IMR-90 (cell line): ENCODE measurements at regions of chr2 and their contacts with region 1.

Region 1: GRCh38 chr2:233443468-233444183 is 89.3 kb downstream of the DGKD start:
- DNase-seq: peak; percentile 83
- ATAC-seq: peak; percentile 90
- H3K4me3 ChIP-seq: no peak overlapping the region
- H3K27ac ChIP-seq: no peak overlapping the region
- H3K4me1 ChIP-seq: no peaks in the 10 kb centered on the region
- H3K27me3 ChIP-seq: no peaks in the 10 kb centered on the region
- CTCF ChIP-seq: peak; percentile 91
- POLR2A ChIP-seq: peak; percentile 30; the same call in 1 of the 2 replicates
- RAD21 ChIP-seq: peak; percentile 95

Region 2: GRCh38 chr2:232688201-232688600 is 755.4 kb before region 1 on chr2:
- CTCF ChIA-PET with region 1: interaction called, 14 read pairs
- POLR2A ChIA-PET with region 1: no interaction called
- dilution Hi-C with region 1: no loop called
- in situ Hi-C with region 1: no loop called
- intact Hi-C with region 1: no loop called
- DNase-seq: no peak
- ATAC-seq: no peak
- H3K4me3 ChIP-seq: no peak overlapping the region
- H3K27ac ChIP-seq: no peak overlapping the region
- H3K4me1 ChIP-seq: no peaks in the 10 kb centered on the region
- H3K27me3 ChIP-seq: peaks cover 11% of the 10 kb centered on the region
- CTCF ChIP-seq: no peak
- POLR2A ChIP-seq: no peak
- RAD21 ChIP-seq: no peak

Region 3: DNA sequence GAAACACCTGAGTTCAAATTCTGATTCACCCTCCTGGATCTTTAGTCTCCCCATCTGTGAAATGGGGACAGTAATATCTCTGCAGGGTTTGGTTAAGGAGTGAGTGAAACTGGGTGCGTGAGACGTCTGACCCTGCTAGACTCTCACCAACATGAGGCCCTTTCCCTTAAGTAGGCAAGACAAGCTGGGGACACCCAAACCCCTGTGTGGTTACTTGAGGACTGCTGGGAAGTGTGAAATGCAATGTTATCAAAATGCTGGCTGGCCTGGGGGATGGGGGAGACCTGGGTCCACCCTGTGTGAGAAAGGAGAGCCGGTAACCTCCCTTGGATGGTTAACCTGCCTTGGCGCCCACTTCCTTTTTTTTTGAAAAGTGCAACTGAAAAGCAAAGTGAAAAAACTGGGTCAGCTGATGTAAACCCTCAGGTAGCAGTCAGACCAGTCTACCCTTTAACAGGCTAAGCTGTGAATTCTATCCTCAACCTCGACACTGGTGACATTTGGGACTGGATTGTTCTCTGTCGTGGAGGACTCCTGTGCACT is 301.2 kb before region 1 on chr2:
- CTCF ChIA-PET with region 1: no interaction called
- POLR2A ChIA-PET with region 1: no interaction called
- dilution Hi-C with region 1: no loop called
- in situ Hi-C with region 1: no loop called
- intact Hi-C with region 1: no loop called
- DNase-seq: no peak
- ATAC-seq: no peak
- H3K4me3 ChIP-seq: no peak overlapping the region
- H3K27ac ChIP-seq: no peak overlapping the region
- H3K4me1 ChIP-seq: no peaks in the 10 kb centered on the region
- H3K27me3 ChIP-seq: peaks cover 8% of the 10 kb centered on the region; the same call in 1 of the 2 replicates
- CTCF ChIP-seq: no peak
- POLR2A ChIP-seq: no peak
- RAD21 ChIP-seq: no peak

Region 4: GRCh38 chr2:233280114-233280693 is 163.4 kb before region 1 on chr2:
- CTCF ChIA-PET with region 1: no interaction called
- POLR2A ChIA-PET with region 1: no interaction called
- dilution Hi-C with region 1: no loop called
- in situ Hi-C with region 1: loop called (anchors 10 kb)
- intact Hi-C with region 1: loop called (anchors 1 kb)
- DNase-seq: no peak
- ATAC-seq: peak; percentile 76
- H3K4me3 ChIP-seq: no peak overlapping the region
- H3K27ac ChIP-seq: no peak overlapping the region
- H3K4me1 ChIP-seq: peaks cover 2% of the 10 kb centered on the region; the same call in 1 of the 2 replicates
- H3K27me3 ChIP-seq: no peaks in the 10 kb centered on the region
- CTCF ChIP-seq: no peak
- POLR2A ChIP-seq: no peak
- RAD21 ChIP-seq: no peak

Region 5: DNA sequence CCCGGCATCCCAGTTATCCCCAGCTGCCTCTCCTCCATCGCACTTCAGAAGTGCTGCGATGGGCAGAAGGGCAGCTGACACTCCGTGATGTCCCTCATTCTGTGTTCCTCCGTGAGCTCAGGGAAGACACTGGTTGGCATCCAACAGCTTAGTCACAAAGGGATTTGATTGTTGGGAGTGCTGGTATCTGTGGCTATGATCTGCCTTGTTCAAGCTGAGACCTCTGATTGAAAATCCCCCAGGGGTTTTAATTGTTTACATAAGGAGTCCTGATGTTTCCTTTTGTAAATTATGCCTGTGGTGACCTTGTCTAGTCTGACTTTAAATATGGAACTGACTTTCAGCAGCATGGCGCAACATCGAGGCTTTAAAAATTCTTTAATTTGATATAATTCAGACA is 154.9 kb before region 1 on chr2:
- CTCF ChIA-PET with region 1: no interaction called
- POLR2A ChIA-PET with region 1: no interaction called
- dilution Hi-C with region 1: no loop called
- in situ Hi-C with region 1: loop called (anchors 10 kb)
- intact Hi-C with region 1: no loop called
- DNase-seq: no peak
- ATAC-seq: no peak
- H3K4me3 ChIP-seq: no peak overlapping the region
- H3K27ac ChIP-seq: no peak overlapping the region
- H3K4me1 ChIP-seq: peaks cover 6% of the 10 kb centered on the region; the same call in 1 of the 2 replicates
- H3K27me3 ChIP-seq: no peaks in the 10 kb centered on the region
- CTCF ChIP-seq: no peak
- POLR2A ChIP-seq: no peak
- RAD21 ChIP-seq: no peak

Region 6: GRCh38 chr2:233353769-233354499 is 89.7 kb before region 1 on chr2 and contains the start of gene DGKD:
- CTCF ChIA-PET with region 1: interaction called, 9 read pairs
- POLR2A ChIA-PET with region 1: no interaction called
- dilution Hi-C with region 1: no loop called
- in situ Hi-C with region 1: loop called (anchors 5 kb)
- intact Hi-C with region 1: loop called (anchors 1 kb)
- DNase-seq: no peak
- ATAC-seq: peak; percentile 93
- H3K4me3 ChIP-seq: peak within 1 kb of the TSS; percentile 100
- H3K27ac ChIP-seq: peak within 1 kb of the TSS; percentile 86
- H3K4me1 ChIP-seq: peaks cover 8% of the 10 kb centered on the region
- H3K27me3 ChIP-seq: peaks cover 4% of the 10 kb centered on the region; the same call in 1 of the 2 replicates
- CTCF ChIP-seq: peak; percentile 34
- POLR2A ChIP-seq: no peak
- RAD21 ChIP-seq: no peak
- total RNA-seq, gene DGKD: 5.8 and 6.5 TPM in 2 replicates

Region 7: DNA sequence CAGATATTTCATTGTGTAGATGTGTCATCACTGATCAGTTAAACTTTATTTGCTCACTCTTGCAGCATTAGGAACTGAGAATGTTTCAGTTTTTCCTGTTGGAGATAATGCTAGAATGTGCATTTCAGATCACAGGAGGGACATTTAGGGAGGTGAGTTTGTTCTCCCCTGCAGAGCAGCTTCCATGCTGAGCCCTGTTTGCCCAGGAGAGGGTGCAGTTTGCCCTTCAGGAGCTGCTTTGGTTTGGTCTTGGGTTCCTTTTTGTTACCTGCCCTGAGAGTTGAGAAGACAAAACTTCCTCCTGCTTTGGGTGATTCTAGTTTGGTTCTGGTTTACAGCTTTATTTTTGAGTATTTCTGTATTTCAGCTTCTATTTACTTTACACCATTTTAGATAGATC is 39.4 kb before region 1 on chr2:
- CTCF ChIA-PET with region 1: interaction called, 18 read pairs
- POLR2A ChIA-PET with region 1: no interaction called
- dilution Hi-C with region 1: no loop called
- in situ Hi-C with region 1: no loop called
- intact Hi-C with region 1: loop called (anchors 1 kb)
- DNase-seq: peak; percentile 48
- ATAC-seq: peak; percentile 74; the same call in 1 of the 2 replicates
- H3K4me3 ChIP-seq: no peak overlapping the region
- H3K27ac ChIP-seq: no peak overlapping the region
- H3K4me1 ChIP-seq: no peaks in the 10 kb centered on the region
- H3K27me3 ChIP-seq: no peaks in the 10 kb centered on the region
- CTCF ChIP-seq: peak; percentile 65
- POLR2A ChIP-seq: no peak
- RAD21 ChIP-seq: peak; percentile 77